Esophagus muscularis mucosa (tissue), 4 donors: ENCODE measurements at regions of chr9 and their contacts with region 1.

Region 1: GRCh38 chr9:134443168-134444037 is 117.1 kb downstream of the RXRA start:
- DNase-seq: peak; percentile 95
- H3K4me3 ChIP-seq: no peak overlapping the region
- H3K27ac ChIP-seq: peak overlapping the region in 3 of 4 donors; percentile 16 to 30 (median 20)
- H3K4me1 ChIP-seq: peaks cover 23 to 36% (median 30%) of the 10 kb centered on the region in 4 donors
- H3K27me3 ChIP-seq: peaks cover 0 to 14% (median 3%) of the 10 kb centered on the region in 4 donors
- CTCF ChIP-seq: peak; percentile 98 to 99 (median 99)
- EP300 ChIP-seq: no peak
- POLR2A ChIP-seq: no peak

Region 2: DNA sequence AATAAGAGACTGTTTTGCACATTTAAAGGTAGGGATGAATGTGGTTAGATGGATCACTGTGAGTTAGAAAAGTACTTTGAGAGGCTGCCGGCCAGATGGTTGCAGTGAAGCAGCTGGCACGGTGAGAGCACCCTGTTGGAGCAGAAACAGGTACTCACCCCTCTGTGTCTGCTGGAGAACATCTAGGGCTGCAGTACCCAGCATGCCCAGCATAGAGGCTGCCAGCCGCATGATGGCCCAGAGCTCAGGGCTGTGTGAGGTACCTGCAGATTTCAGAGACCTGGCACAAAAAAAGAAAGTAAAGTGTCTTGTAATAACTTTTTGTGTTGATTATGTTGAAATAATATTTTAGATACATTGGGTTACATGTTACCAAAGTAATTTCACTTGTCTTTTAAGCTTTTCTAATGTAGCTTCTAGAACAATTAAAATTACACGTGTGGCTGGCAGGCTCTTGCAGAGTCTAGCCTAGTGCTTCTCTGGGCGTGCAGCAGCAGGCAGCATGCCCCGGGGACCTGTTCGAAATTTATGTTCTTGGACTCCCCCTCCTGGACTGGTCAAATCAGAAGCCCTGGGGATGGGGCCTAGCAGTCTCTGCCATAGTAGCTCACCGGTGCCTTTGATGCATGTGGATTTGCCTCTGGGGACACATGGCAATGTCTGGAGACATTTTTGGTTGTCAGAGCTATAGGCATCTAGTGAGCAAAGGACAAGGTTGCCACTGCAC is 296.5 kb before region 1 on chr9:
- intact Hi-C with region 1: no loop called
- DNase-seq: no peak
- H3K4me3 ChIP-seq: no peak overlapping the region
- H3K27ac ChIP-seq: no peak overlapping the region
- H3K4me1 ChIP-seq: no peaks in the 10 kb centered on the region
- H3K27me3 ChIP-seq: no peaks in the 10 kb centered on the region
- CTCF ChIP-seq: no peak
- EP300 ChIP-seq: no peak
- POLR2A ChIP-seq: no peak

Region 3: DNA sequence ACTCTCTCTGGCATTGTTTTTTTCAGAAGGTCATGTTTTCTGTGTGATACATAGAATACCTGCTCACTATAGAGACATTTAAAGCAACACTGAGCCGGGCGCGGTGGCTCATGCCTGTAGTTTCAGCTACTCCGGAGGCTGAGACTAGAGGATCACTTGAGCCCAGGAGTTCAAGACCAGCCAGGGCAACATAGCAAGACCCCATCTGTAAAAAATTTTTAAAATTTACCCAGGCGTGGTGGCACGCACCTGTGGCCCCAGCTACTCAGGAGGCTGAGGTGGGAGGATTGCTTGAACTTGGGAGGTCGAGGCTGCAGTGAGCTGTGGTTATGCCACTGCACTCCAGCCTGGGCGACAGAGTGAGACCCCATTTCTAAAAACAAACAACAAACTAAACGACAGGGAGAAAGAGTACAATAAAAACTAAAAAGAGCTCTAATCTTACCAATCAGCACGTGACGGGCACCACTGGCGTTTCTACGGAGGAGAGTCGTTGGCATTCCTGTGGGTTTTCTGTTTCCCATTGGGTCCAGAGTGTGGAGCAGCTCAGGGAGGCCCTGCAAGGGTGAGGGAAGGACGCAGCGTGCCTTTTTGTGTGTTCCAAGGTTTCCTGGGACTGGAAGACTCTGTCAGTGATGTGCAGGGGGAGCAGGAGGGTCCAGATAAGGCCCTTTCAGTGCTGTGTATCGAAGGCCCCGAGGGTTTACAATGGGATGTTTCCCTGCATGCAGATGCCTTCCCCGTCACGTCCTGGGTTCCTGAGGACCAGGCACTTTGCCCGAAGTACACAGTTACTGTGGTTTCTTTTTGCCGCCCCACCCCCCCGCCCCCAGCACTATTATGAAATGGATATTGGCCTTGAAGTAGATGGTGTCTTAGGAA is 271.8 kb before region 1 on chr9:
- intact Hi-C with region 1: loop called (anchors 1 kb)
- DNase-seq: no peak
- H3K4me3 ChIP-seq: no peak overlapping the region
- H3K27ac ChIP-seq: peak overlapping the region in 3 of 4 donors; percentile 16 to 34 (median 22)
- H3K4me1 ChIP-seq: peaks cover 10 to 34% (median 31%) of the 10 kb centered on the region in 4 donors
- H3K27me3 ChIP-seq: peaks cover 0 to 41% (median 10%) of the 10 kb centered on the region in 4 donors
- CTCF ChIP-seq: no peak
- EP300 ChIP-seq: no peak
- POLR2A ChIP-seq: no peak

Region 4: GRCh38 chr9:134474055-134474370 is 30.6 kb after region 1 on chr9:
- intact Hi-C with region 1: no loop called
- DNase-seq: no peak
- H3K4me3 ChIP-seq: no peak overlapping the region
- H3K27ac ChIP-seq: peak overlapping the region; percentile 66 to 75 (median 70)
- H3K4me1 ChIP-seq: peaks cover 30 to 64% (median 52%) of the 10 kb centered on the region in 4 donors
- H3K27me3 ChIP-seq: no peaks in the 10 kb centered on the region
- CTCF ChIP-seq: no peak
- EP300 ChIP-seq: no peak
- POLR2A ChIP-seq: no peak

Region 5: GRCh38 chr9:134484479-134484878 is 41.1 kb after region 1 on chr9:
- intact Hi-C with region 1: no loop called
- DNase-seq: no peak
- H3K4me3 ChIP-seq: no peak overlapping the region
- H3K27ac ChIP-seq: no peak overlapping the region
- H3K4me1 ChIP-seq: no peaks in the 10 kb centered on the region
- H3K27me3 ChIP-seq: no peaks in the 10 kb centered on the region
- CTCF ChIP-seq: no peak
- EP300 ChIP-seq: no peak
- POLR2A ChIP-seq: no peak